Posterior cingulate gyrus (tissue), 11 donors: ENCODE measurements at regions of chr20 and their contacts with region 1.

Region 1: GRCh38 chr20:25294459-25295385 is 46.8 kb downstream of the PYGB start:
- DNase-seq: peak in 9 of 10 donors; percentile 49 to 95 (median 76)

Region 2: DNA sequence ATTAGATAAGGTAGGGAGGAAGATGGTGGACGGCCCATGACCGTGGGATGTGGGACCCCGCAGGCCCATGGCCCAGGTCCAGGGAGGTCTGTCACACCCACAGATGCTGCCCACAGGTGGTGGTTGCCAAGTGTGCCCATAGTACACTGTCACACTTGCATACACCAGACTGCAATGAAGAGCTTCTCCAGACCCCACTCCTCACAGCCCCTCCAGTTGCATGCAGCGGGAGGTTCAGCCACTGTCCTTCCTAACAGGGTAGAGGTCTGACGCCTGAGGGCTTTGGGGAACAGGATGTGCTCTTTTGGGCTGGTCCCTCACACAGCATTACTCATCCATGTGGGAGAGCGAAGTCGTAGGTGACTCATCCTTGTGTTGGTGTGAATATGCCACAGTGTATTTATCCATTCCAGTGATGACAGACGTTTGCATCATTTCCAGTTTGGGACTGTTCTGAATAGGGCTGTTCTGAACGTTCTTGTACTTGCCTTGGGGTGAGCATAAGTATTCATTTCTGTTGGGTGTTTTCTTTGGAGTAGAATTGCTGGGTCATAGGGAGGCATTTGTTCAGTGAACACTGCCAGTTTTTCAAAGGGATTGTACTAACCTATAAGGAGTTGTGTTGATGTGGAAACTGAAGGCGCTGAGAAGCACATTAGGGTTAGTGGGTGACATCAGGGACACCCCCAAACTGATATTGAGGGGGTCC is 57.0 kb before region 1 on chr20:
- intact Hi-C with region 1: loop called (anchors 10 kb)
- DNase-seq: peak in 4 of 10 donors; percentile 25 to 79 (median 42)